ENCODE measurements at regions of chr10 and their contacts with region 1.

Region 1: DNA sequence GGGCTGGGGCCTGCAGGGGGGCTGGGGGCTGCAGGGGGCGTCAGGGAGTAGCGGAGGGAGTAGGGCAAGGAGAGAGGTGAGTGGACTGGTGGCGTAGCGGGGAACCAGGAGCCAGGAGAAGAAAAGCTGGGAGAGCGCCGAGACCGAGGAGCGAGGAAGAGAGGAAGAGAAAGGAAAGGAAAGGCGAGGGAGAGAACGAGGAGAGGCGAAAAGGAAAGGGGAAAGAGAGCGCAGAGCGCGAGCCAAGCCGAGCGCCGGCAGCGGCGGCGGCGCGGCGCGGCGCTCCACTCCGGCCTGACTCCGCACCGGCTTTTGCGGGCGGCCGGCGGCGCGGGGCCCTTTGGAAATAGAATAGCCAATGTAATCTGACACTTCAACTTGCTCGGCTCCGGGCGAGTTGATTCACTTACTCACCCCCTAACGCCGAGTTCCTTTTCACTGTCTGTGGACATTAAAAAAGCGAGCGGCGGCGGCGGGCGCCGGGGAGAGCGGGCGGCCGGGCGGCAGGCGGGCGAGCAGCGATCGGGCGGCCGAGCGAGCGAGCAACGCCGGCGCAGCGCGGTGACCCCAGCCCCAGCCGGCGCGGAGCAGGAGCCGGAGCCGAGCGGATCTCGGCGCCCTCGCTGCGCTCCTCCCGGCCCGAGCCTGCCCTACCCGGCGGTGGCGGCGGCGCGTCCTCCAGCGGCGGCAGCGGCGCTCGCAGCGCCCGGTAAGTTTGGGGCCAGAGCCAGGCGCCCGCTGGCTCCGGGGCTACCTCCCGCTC is at the start of gene ZMIZ1:
- DNase-seq: peak; percentile 91 to 93
- H3K4me3 ChIP-seq: peak within 1 kb of the TSS; percentile 82
- H3K4me3 Mint-ChIP-seq: peak within 1 kb of the TSS; percentile 74
- H3K27ac Mint-ChIP-seq: peak within 1 kb of the TSS; percentile 89
- H3K4me1 ChIP-seq: peaks cover 37% of the 10 kb centered on the region
- H3K4me1 Mint-ChIP-seq: peaks cover 21% of the 10 kb centered on the region
- H3K27me3 ChIP-seq: no peaks in the 10 kb centered on the region
- H3K27me3 Mint-ChIP-seq: no peaks in the 10 kb centered on the region
- CTCF ChIP-seq: peak; percentile 25 to 41
- total RNA-seq, gene ZMIZ1: 42.3 and 43.7 TPM in 2 replicates

Region 2: DNA sequence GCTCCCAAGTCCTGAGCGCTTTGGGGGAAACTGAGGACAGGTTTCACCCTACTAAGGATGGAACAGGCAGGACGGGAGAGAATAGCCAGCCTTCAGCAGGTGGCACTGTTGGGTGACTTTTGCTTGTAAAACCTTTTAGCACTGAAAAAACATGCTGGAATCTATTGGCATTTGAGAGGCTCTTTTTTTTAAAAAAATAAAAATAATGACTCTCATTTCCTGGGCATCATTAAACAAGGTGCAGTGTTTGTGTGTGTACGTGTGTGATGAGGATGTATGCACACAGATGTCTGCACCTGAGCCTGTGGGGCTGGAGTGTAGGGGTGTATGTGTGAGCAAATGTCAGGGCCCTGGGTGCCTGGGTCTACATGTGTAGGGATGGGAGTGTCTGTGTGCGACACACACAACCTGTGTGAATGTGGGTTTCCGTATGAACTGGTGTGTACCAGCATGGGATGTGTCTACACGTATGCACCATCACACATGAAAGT is 857.1 kb before region 1 on chr10:
- CTCF ChIA-PET with region 1: no interaction called
- POLR2A ChIA-PET with region 1: no interaction called
- intact Hi-C with region 1: loop called (anchors 5 kb)
- DNase-seq: peak in 1 of 2 experiments; percentile 58
- H3K4me3 ChIP-seq: no peak overlapping the region
- H3K4me3 Mint-ChIP-seq: no peak overlapping the region
- H3K27ac Mint-ChIP-seq: no peak overlapping the region
- H3K4me1 ChIP-seq: no peaks in the 10 kb centered on the region
- H3K4me1 Mint-ChIP-seq: no peaks in the 10 kb centered on the region
- H3K27me3 ChIP-seq: no peaks in the 10 kb centered on the region; the same call in 1 of the 2 replicates
- H3K27me3 Mint-ChIP-seq: no peaks in the 10 kb centered on the region
- CTCF ChIP-seq: peak; percentile 36 to 75

Region 3: DNA sequence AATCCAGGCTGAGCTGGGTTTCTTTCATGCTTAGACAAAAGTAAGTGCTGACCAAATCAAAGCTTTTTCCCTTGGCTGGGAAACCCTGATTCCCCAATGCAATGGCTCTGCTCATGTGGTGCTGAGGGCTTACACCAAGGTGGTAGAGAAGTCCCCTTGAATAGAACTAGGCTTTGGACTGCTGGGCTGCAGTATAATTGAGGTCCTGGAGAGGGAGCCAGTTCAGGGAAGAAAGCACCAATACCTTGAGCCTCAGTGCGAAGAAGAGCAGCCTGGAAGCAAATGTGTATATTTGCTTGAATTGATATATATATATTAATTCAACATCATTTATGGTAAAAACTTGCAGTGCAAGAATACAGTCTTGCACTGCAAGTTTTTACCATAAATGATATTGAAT is 644.0 kb before region 1 on chr10:
- CTCF ChIA-PET with region 1: no interaction called
- POLR2A ChIA-PET with region 1: no interaction called
- intact Hi-C with region 1: loop called (anchors 10 kb)
- DNase-seq: peak in 1 of 2 experiments; percentile 53
- H3K4me3 ChIP-seq: no peak overlapping the region
- H3K4me3 Mint-ChIP-seq: no peak overlapping the region
- H3K27ac Mint-ChIP-seq: no peak overlapping the region
- H3K4me1 ChIP-seq: no peaks in the 10 kb centered on the region
- H3K4me1 Mint-ChIP-seq: no peaks in the 10 kb centered on the region
- H3K27me3 ChIP-seq: no peaks in the 10 kb centered on the region
- H3K27me3 Mint-ChIP-seq: no peaks in the 10 kb centered on the region
- CTCF ChIP-seq: peak; percentile 47 to 68

Region 4: DNA sequence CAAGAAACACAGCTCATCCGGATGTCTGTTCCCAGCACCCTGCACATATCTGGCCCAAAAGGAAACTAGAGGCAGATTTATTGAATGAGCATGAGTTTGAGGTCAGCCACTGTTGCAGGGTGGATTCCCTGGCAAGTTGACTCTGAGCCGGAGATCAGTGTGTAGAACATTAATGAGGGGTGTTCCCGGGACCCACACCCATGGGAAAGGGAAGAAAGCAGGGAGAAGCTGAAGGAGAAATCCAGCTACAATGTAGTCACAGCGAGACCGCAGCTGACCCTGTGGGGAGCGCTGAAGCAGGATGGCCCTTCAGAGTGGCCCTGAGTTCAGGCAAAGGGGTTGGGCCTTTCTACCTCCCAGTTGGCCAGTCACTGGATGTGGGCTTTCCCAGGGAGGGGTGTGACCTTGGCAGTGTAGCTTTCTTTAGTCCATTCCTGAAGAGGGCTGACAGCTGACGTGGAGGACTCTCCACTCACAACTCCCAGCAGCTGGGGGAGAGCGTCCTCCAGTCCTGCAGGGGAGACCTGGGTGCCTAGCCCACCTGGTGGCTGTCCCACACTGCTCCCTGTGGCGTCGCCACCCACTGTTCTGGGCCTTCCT is 324.2 kb before region 1 on chr10:
- CTCF ChIA-PET with region 1: interaction called, 4 read pairs
- POLR2A ChIA-PET with region 1: no interaction called
- intact Hi-C with region 1: loop called (anchors 1 kb)
- DNase-seq: no peak
- H3K4me3 ChIP-seq: no peak overlapping the region
- H3K4me3 Mint-ChIP-seq: no peak overlapping the region
- H3K27ac Mint-ChIP-seq: peak overlapping the region; percentile 86
- H3K4me1 ChIP-seq: peaks cover 52% of the 10 kb centered on the region
- H3K4me1 Mint-ChIP-seq: peaks cover 51% of the 10 kb centered on the region
- H3K27me3 ChIP-seq: no peaks in the 10 kb centered on the region
- H3K27me3 Mint-ChIP-seq: no peaks in the 10 kb centered on the region
- CTCF ChIP-seq: peak in 1 of 2 experiments; percentile 2

Region 5: DNA sequence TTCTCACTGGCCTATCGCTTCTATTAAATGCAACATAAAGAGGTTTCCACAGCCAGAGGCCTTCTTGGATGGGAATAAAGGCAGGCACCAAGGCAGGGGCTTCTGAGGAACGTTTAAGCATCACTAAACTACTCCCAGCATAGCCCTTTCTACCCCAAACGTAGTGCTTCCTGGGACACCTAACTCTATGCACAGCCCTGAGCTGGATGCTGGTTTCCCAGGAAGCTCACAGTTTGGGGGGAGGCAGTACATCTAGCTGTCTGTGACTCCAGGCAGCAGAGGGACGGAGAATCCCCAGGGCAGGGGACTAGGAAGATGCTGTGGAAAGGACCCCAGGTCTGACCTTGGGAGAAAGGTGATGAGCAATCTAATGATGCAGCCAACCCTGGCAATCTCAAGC is 192.8 kb before region 1 on chr10:
- CTCF ChIA-PET with region 1: no interaction called
- POLR2A ChIA-PET with region 1: no interaction called
- intact Hi-C with region 1: no loop called
- DNase-seq: no peak
- H3K4me3 ChIP-seq: no peak overlapping the region
- H3K4me3 Mint-ChIP-seq: no peak overlapping the region
- H3K27ac Mint-ChIP-seq: no peak overlapping the region
- H3K4me1 ChIP-seq: no peaks in the 10 kb centered on the region
- H3K4me1 Mint-ChIP-seq: no peaks in the 10 kb centered on the region
- H3K27me3 ChIP-seq: no peaks in the 10 kb centered on the region; the same call in 1 of the 2 replicates
- H3K27me3 Mint-ChIP-seq: peaks cover 3% of the 10 kb centered on the region
- CTCF ChIP-seq: no peak

Region 6: GRCh38 chr10:79005126-79005810 is 63.5 kb before region 1 on chr10:
- CTCF ChIA-PET with region 1: no interaction called
- POLR2A ChIA-PET with region 1: interaction called, 12 read pairs
- intact Hi-C with region 1: no loop called
- DNase-seq: no peak
- H3K4me3 ChIP-seq: no peak overlapping the region
- H3K4me3 Mint-ChIP-seq: no peak overlapping the region
- H3K27ac Mint-ChIP-seq: no peak overlapping the region
- H3K4me1 ChIP-seq: peaks cover 5% of the 10 kb centered on the region; the same call in 1 of the 2 replicates
- H3K4me1 Mint-ChIP-seq: no peaks in the 10 kb centered on the region
- H3K27me3 ChIP-seq: no peaks in the 10 kb centered on the region
- H3K27me3 Mint-ChIP-seq: no peaks in the 10 kb centered on the region
- CTCF ChIP-seq: no peak

Region 7: DNA sequence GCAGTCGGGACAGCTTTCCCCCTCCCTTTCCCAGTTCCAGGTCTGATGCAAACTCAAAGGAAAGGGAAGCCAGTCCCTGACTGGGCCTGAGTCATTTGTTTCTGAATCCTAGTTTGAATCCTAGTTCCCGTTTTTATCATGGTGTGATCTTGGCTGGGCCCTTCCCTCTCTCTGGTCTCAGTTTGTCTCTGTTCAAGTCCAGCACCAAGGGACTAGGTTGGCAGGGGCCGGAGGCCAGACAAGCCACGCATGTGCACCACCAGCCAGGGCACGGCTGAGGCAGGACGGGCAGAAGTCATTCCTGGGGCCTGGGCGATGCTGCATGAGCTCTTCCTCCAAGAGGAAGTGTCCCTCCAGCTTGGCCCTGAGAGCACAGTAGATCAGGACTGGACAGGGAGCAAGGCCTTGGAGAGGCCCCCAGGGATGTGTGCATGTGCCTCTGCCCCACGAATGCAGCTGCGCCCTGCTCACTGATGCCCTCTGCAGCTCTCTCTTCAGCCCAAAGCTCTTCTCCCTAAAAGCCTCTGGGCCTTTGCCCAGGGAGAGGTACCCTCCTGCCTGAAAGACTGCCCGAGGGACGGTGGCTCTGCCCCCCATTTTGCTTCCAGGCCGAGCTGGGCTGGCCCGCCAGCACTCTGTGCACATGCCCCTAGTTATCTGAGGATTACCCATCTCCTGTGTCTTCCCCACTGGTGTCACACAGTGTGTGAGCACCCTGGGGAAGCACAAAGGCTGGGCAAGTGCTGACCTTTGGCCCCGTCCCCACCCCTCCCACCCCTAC is 86.7 kb after region 1 on chr10:
- CTCF ChIA-PET with region 1: interaction called, 4 read pairs
- POLR2A ChIA-PET with region 1: interaction called, 8 read pairs
- intact Hi-C with region 1: loop called (anchors 2 kb)
- DNase-seq: no peak
- H3K4me3 ChIP-seq: no peak overlapping the region
- H3K4me3 Mint-ChIP-seq: no peak overlapping the region
- H3K27ac Mint-ChIP-seq: peak overlapping the region; percentile 96
- H3K4me1 ChIP-seq: peaks cover 56% of the 10 kb centered on the region
- H3K4me1 Mint-ChIP-seq: peaks cover 31% of the 10 kb centered on the region
- H3K27me3 ChIP-seq: no peaks in the 10 kb centered on the region
- H3K27me3 Mint-ChIP-seq: no peaks in the 10 kb centered on the region
- CTCF ChIP-seq: peak in 1 of 2 experiments; percentile 11

Measured in Caco-2 (cell line).